Psoas muscle (tissue), 8 donors: ENCODE measurements at regions of chr7 and their contacts with region 1.

Region 1: GRCh38 chr7:25894902-25895791 is 256.9 kb upstream of the NFE2L3 start:
- DNase-seq: peak; percentile 74 to 84
- ATAC-seq: peak; percentile 50 to 85 (median 76)
- H3K4me3 ChIP-seq: peak overlapping the region; percentile 56
- H3K27ac ChIP-seq: no peak overlapping the region
- H3K4me1 ChIP-seq: peaks cover 13% of the 10 kb centered on the region
- H3K27me3 ChIP-seq: no peaks in the 10 kb centered on the region
- CTCF ChIP-seq: peak; percentile 66

Region 2: GRCh38 chr7:25420771-25421170 is 474.4 kb before region 1 on chr7:
- intact Hi-C with region 1: no loop called
- DNase-seq: no peak
- ATAC-seq: no peak
- H3K4me3 ChIP-seq: no peak overlapping the region
- H3K27ac ChIP-seq: no peak overlapping the region
- H3K4me1 ChIP-seq: no peaks in the 10 kb centered on the region
- H3K27me3 ChIP-seq: peaks cover 1 to 6% (median 5%) of the 10 kb centered on the region in 3 donors
- CTCF ChIP-seq: no peak

Region 3: GRCh38 chr7:25512061-25512687 is 383.0 kb before region 1 on chr7:
- intact Hi-C with region 1: no loop called
- DNase-seq: no peak
- ATAC-seq: no peak
- H3K4me3 ChIP-seq: no peak overlapping the region
- H3K27ac ChIP-seq: no peak overlapping the region
- H3K4me1 ChIP-seq: no peaks in the 10 kb centered on the region
- H3K27me3 ChIP-seq: no peaks in the 10 kb centered on the region
- CTCF ChIP-seq: no peak

Region 4: DNA sequence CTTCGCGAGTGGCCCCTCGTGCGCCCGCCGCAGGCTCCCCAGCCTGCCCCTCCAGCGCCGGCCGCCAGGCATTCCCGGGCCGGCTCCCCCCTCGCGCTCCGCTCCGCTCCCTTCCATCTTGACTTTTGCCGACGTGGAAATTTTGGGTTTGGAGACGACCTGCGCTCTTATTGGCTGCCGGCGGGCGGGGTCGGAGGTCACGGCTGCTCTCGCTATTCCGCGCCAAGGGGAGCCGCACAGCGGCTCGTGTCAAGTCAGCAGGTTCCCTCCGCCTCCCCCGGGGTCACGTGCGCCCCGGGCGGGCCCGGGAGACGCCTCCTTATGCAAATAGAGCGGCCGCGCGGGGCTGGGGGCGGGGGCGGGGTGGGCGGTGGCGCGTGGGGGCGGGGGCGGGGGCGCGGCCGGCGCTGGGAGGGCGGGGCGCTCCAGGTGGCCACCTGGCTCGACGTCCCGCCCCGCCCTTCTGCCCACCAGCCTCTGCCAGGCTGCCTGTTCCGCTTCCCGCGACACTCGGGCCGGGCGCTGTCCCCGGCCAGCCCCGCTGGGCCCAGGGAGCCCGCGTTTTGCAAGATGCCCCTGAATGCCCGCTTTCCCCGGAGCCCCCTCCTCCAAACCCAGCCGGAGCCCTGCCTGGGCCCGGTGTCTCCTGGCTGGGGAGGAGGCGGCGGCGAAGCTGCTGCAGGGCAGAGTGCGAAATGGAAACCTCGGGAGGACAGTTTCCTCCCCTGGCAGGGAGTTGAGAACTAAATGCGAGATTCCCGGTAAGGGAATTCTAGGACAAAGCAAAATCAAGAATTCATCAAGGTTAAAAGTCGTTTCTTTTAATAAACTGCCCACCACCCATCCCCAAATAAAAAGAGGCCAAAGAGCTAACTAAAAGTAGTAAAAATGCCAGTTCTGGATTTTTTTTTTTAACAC is 56.1 kb after region 1 on chr7:
- intact Hi-C with region 1: loop called in 1 of 2 experiments (anchors 5 kb)
- DNase-seq: peak; percentile 90 to 94
- ATAC-seq: peak; percentile 90 to 99 (median 97)
- H3K4me3 ChIP-seq: peak overlapping the region; percentile 69
- H3K27ac ChIP-seq: peak overlapping the region; percentile 66
- H3K4me1 ChIP-seq: no peaks in the 10 kb centered on the region
- H3K27me3 ChIP-seq: no peaks in the 10 kb centered on the region
- CTCF ChIP-seq: no peak

Region 5: GRCh38 chr7:26061688-26062150 is 166.6 kb after region 1 on chr7:
- intact Hi-C with region 1: loop called (anchors 1 kb)
- DNase-seq: peak; percentile 45 to 67
- ATAC-seq: peak; percentile 57 to 87 (median 78)
- H3K4me3 ChIP-seq: no peak overlapping the region
- H3K27ac ChIP-seq: no peak overlapping the region
- H3K4me1 ChIP-seq: no peaks in the 10 kb centered on the region
- H3K27me3 ChIP-seq: no peaks in the 10 kb centered on the region
- CTCF ChIP-seq: peak; percentile 80

Region 6: DNA sequence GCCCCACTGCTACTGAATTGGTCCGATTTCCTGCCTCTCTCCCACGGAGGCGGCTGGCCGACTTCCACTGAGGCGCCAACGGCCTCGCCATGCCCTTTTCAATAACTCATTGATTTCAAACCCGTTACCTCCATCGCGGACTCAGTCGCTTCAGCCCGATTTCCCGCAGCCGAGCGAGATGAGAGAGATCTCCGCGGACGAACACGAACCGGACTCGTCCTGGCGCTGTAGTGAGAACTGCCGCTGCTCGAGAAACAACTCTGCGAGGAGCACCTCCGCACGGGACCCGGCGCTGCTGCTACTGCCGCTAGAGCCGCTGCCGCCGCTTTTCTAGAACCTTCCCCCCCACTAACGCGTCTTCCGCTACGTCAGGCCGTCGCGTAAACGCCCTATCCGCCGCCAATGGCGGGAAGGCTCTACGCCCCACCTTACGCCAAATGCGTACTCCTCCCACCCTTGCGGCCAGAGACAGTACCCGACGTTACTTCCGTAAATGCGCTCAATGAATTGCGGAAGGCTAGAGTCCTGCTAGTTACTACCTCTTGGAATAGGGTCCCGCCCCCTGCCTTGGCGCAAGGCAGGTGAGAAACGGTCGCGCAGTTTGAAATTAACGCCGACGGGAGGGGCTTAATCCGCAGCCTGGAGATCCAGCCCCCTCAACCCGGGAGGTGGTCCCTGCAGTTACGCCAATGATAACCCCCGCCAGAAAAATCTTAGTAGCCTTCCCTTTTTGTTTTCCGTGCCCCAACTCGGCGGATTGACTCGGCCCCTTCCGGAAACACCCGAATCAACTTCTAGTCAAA is 305.5 kb after region 1 on chr7 and contains the start of gene HNRNPA2B1:
- intact Hi-C with region 1: loop called (anchors 10 kb)
- DNase-seq: peak; percentile 94 to 98
- ATAC-seq: peak; percentile 80 to 85 (median 84)
- H3K4me3 ChIP-seq: peak within 1 kb of the TSS; percentile 90
- H3K27ac ChIP-seq: peak within 1 kb of the TSS; percentile 97
- H3K4me1 ChIP-seq: peaks cover 38% of the 10 kb centered on the region
- H3K27me3 ChIP-seq: no peaks in the 10 kb centered on the region
- CTCF ChIP-seq: peak; percentile 7
- total RNA-seq, gene HNRNPA2B1: 323 to 482 (median 452) TPM

Region 7: DNA sequence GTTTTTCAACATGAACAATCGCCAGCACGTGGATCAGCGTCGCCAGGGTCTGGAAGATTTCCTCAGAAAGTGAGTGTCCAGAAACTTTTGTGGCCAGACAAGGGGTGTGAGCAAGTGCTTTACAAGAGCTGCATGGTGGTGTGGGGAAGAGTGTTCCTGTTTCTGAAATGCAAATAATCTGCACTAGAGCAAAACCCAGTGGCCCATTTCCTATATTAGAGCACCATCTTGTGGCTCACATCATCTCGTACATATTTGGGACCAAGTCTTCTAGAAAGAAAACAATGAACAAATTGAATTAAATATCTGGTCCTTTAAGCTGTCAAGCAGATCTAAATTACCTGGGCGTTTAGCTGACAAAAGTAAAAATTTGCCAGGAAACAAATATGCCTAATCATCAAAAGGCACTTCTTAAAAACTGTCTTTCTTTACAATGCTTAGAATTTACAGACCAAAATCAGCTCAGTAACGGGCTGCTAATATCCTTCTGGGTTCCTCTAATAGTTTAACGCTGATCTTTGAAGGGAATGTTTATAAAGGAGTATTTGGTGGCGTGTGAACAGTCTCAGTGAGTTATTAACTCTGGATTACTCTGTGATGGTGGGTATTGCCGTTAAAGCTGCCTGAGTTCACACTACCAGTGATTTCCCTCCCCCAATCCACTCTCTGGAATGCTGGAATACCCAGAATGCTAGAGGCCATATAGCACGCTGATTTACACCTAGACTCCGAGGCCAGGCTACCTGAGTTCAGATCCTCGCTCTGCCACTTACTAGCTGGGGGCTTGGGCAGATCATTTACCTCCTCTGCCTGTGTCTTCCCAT is 470.1 kb after region 1 on chr7:
- intact Hi-C with region 1: loop called (anchors 1 to 2 kb)
- DNase-seq: no peak
- ATAC-seq: peak; percentile 78 to 96 (median 88)
- H3K4me3 ChIP-seq: no peak overlapping the region
- H3K27ac ChIP-seq: no peak overlapping the region
- H3K4me1 ChIP-seq: no peaks in the 10 kb centered on the region
- H3K27me3 ChIP-seq: peaks cover 0 to 5% (median 5%) of the 10 kb centered on the region in 3 donors
- CTCF ChIP-seq: peak; percentile 80

Region 8: GRCh38 chr7:26490650-26491624 is 595.8 kb after region 1 on chr7:
- intact Hi-C with region 1: loop called in 1 of 2 experiments (anchors 10 kb)
- DNase-seq: peak in 1 of 2 donors; percentile 76
- ATAC-seq: peak; percentile 33 to 98 (median 92)
- H3K4me3 ChIP-seq: no peak overlapping the region
- H3K27ac ChIP-seq: no peak overlapping the region
- H3K4me1 ChIP-seq: peaks cover 6% of the 10 kb centered on the region
- H3K27me3 ChIP-seq: no peaks in the 10 kb centered on the region
- CTCF ChIP-seq: no peak

Region 9: GRCh38 chr7:26667500-26668133 is 772.5 kb after region 1 on chr7:
- intact Hi-C with region 1: loop called (anchors 5 to 10 kb)
- DNase-seq: peak in 1 of 2 donors; percentile 18
- ATAC-seq: peak; percentile 51 to 85 (median 72)
- H3K4me3 ChIP-seq: no peak overlapping the region
- H3K27ac ChIP-seq: no peak overlapping the region
- H3K4me1 ChIP-seq: no peaks in the 10 kb centered on the region
- H3K27me3 ChIP-seq: no peaks in the 10 kb centered on the region
- CTCF ChIP-seq: peak; percentile 76